ENCODE measurements at regions of chr1 and their contacts with region 1.

Region 1: GRCh38 chr1:115609021-115609420 is 32.7 kb upstream of the VANGL1 start:
- DNase-seq: no peak
- H3K4me3 ChIP-seq: no peak overlapping the region
- H3K27ac ChIP-seq: no peak overlapping the region
- H3K4me1 ChIP-seq: peaks cover 0 to 4% (median 0%) of the 10 kb centered on the region in 4 experiments; a peak in 1 of 7 replicates
- H3K27me3 ChIP-seq: no peaks in the 10 kb centered on the region; a peak in 1 of 7 replicates
- CTCF ChIP-seq: no peak
- EP300 ChIP-seq: no peak
- POLR2A ChIP-seq: no peak
- RAD21 ChIP-seq: no peak

Region 2: GRCh38 chr1:115577513-115577912 is 31.5 kb before region 1 on chr1:
- CTCF ChIA-PET with region 1: no interaction called
- POLR2A ChIA-PET with region 1: no interaction called
- DNase-seq: no peak
- H3K4me3 ChIP-seq: no peak overlapping the region
- H3K27ac ChIP-seq: no peak overlapping the region
- H3K4me1 ChIP-seq: no peaks in the 10 kb centered on the region
- H3K27me3 ChIP-seq: no peaks in the 10 kb centered on the region
- CTCF ChIP-seq: no peak
- EP300 ChIP-seq: no peak
- POLR2A ChIP-seq: no peak
- RAD21 ChIP-seq: no peak

Region 3: DNA sequence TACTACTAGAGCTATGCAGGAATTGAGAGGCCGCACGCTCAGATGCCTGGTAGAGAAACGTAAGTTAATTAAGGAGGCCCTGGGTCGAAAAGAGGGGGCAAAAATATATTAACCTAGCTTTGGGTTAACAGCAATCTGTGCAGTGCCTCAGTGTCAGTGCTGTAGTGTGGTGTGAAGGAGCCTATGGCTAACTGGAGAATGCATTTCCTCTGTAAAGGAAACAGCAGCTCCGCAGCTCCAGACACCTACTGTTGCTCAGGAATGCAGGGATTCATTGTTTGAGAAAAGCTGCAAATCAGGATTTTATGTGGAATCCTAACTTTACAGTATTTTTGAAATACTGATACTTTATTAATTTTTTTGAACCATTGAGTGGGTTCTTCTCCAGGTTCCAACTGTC is 51.1 kb after region 1 on chr1:
- CTCF ChIA-PET with region 1: interaction called, 10 read pairs
- POLR2A ChIA-PET with region 1: no interaction called
- DNase-seq: no peak
- H3K4me3 ChIP-seq: no peak overlapping the region
- H3K27ac ChIP-seq: no peak overlapping the region; the same call in 1 of the 2 replicates
- H3K4me1 ChIP-seq: peaks cover 0 to 15% (median 9%) of the 10 kb centered on the region in 4 experiments; a peak in 6 of 7 replicates
- H3K27me3 ChIP-seq: no peaks in the 10 kb centered on the region
- CTCF ChIP-seq: no peak
- EP300 ChIP-seq: no peak
- POLR2A ChIP-seq: no peak
- RAD21 ChIP-seq: no peak

Region 4: DNA sequence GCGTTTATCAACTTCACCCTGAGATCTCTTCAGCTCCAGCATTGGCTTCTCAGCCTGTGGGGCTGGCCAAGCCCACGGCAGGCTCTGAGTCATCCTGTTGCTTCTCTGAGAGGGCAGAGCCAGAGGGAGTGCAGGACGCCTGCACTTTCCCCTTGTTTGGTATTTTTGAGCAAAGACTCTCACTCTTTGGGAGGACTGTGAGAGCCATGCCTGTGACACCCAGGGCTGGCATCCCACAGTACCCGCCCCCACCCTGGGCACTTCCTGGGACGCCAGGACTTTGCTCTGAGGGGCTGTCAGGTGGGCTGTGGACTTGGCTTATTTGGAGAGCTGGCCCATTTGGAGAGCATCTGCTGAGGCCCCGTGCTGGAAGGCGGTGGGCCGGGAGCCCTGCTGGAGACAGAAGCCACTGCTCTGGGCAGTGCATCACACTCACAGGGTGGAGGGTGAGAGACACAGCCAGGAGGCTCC is 70.2 kb after region 1 on chr1:
- CTCF ChIA-PET with region 1: interaction called, 10 read pairs
- POLR2A ChIA-PET with region 1: no interaction called
- DNase-seq: no peak
- H3K4me3 ChIP-seq: no peak overlapping the region
- H3K27ac ChIP-seq: no peak overlapping the region
- H3K4me1 ChIP-seq: peaks cover 0 to 2% (median 0%) of the 10 kb centered on the region in 4 experiments; a peak in 2 of 7 replicates
- H3K27me3 ChIP-seq: no peaks in the 10 kb centered on the region
- CTCF ChIP-seq: no peak
- EP300 ChIP-seq: no peak
- POLR2A ChIP-seq: no peak
- RAD21 ChIP-seq: no peak

Region 5: DNA sequence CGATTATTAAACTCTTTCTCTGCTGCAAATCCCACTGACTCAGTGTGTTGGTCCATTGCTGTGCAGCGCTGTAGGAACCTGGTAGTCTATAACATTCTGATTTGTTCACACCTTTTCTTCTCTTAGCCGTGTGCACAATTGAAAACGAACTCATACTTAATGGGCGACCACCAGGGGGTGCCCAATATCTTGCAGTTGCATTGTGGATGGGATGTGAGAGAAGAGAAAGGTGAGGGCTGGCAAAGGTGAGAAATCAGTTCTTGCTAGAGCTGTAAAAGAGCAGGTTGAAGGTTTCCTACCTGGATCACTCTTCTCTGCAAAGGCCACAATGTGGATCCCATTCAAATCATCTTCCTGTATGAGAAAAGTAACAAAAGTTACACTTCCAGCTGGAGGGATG is 108.5 kb after region 1 on chr1:
- CTCF ChIA-PET with region 1: interaction called, 22 read pairs
- POLR2A ChIA-PET with region 1: no interaction called
- DNase-seq: peak in 1 of 2 experiments; percentile 81
- H3K4me3 ChIP-seq: no peak overlapping the region
- H3K27ac ChIP-seq: no peak overlapping the region
- H3K4me1 ChIP-seq: peaks cover 0 to 4% (median 0%) of the 10 kb centered on the region in 4 experiments; a peak in 3 of 7 replicates
- H3K27me3 ChIP-seq: no peaks in the 10 kb centered on the region
- CTCF ChIP-seq: peak; percentile 35 to 83 (median 68)
- EP300 ChIP-seq: no peak
- POLR2A ChIP-seq: no peak
- RAD21 ChIP-seq: peak; percentile 85 to 92

Region 6: DNA sequence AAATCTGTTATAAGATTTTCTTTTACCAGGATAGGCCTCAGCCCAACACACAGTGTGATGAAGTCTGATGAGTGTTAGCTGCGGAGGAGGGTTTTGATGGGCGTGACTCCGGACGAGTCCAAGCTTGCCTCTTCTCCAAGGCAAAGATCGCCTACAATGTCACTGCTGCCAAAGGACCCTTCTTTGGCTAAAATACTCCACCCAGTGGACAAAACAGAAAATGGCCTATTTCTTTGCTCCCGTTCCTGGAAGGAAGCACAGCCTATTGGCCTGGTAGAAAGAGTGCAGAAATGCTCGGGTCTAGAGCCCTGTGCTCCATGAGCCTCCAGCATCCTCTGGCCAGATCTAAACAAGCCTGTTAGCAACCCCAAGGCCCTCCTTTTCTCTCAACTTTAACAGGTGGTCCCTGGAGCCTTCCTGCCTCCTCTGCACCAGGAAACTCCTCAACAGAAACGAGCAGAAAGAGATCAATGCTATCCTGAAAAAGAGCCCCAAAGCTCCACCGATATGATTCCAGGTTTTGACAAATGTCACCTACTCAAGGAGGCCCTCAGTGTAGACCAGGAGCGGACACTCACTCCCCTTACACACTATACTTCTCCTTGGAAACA is 162.9 kb after region 1 on chr1:
- CTCF ChIA-PET with region 1: interaction called, 47 read pairs
- POLR2A ChIA-PET with region 1: no interaction called
- DNase-seq: peak; percentile 53 to 72
- H3K4me3 ChIP-seq: peak overlapping the region in 3 of 4 experiments; percentile 13 to 47 (median 30); a peak in 4 of 8 replicates
- H3K27ac ChIP-seq: no peak overlapping the region
- H3K4me1 ChIP-seq: no peaks in the 10 kb centered on the region; a peak in 2 of 7 replicates
- H3K27me3 ChIP-seq: no peaks in the 10 kb centered on the region
- CTCF ChIP-seq: peak in 2 of 3 experiments; percentile 91 to 93; a peak in 3 of 4 replicates
- EP300 ChIP-seq: no peak
- POLR2A ChIP-seq: peak in 1 of 2 experiments; percentile 48; a peak in 1 of 3 replicates
- RAD21 ChIP-seq: peak; percentile 91 to 93

Measured in H1 (cell line).